Natural killer cell (primary cell): ENCODE measurements at regions of chr21 and their contacts with region 1.

Region 1: GRCh38 chr21:17387030-17387617 is 125.7 kb upstream of the CXADR start:
- DNase-seq: peak in 1 of 2 donors; percentile 75
- ATAC-seq: no peak
- H3K4me3 ChIP-seq: no peak overlapping the region
- H3K4me3 Mint-ChIP-seq: no peak overlapping the region
- H3K27ac ChIP-seq: no peak overlapping the region
- H3K27ac Mint-ChIP-seq: no peak overlapping the region
- H3K4me1 ChIP-seq: no peaks in the 10 kb centered on the region
- H3K4me1 Mint-ChIP-seq: no peaks in the 10 kb centered on the region
- H3K27me3 ChIP-seq: no peaks in the 10 kb centered on the region
- H3K27me3 Mint-ChIP-seq: no peaks in the 10 kb centered on the region
- CTCF ChIP-seq: peak; percentile 68

Region 2: DNA sequence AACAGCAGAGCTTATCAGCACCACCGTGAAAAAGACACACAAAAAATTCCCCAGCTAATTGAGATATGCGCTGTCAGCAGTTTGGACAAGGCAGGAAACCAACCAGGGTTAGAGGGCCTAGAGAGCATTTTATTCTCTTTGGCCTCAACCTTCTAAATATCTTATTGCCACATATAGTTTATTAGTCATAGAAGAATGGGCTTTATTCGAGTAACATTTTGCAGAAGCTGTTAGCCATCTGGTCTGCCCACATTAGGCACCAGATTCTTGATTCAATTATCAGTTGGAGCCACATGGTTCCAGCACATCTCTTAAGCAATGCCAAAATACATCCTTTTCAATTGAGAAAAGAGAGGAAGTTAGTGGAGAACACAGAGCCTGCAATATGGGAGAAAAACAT is 15.8 kb after region 1 on chr21:
- intact Hi-C with region 1: loop called (anchors 1 kb)
- DNase-seq: no peak
- ATAC-seq: no peak
- H3K4me3 ChIP-seq: no peak overlapping the region
- H3K4me3 Mint-ChIP-seq: no peak overlapping the region
- H3K27ac ChIP-seq: no peak overlapping the region
- H3K27ac Mint-ChIP-seq: no peak overlapping the region
- H3K4me1 ChIP-seq: no peaks in the 10 kb centered on the region
- H3K4me1 Mint-ChIP-seq: no peaks in the 10 kb centered on the region
- H3K27me3 ChIP-seq: no peaks in the 10 kb centered on the region
- H3K27me3 Mint-ChIP-seq: no peaks in the 10 kb centered on the region
- CTCF ChIP-seq: no peak